ENCODE measurements at regions of chr13 and their contacts with region 1.

Region 1: GRCh38 chr13:49810567-49811526 is 18.4 kb upstream of the KPNA3 start:
- DNase-seq: peak; percentile 93
- ATAC-seq: peak; percentile 83
- H3K4me3 ChIP-seq: peak overlapping the region; percentile 6 to 49 (median 39); a peak in 4 of 6 replicates
- H3K27ac ChIP-seq: peak overlapping the region; percentile 92
- H3K4me1 ChIP-seq: peaks cover 100% of the 10 kb centered on the region
- H3K27me3 ChIP-seq: no peaks in the 10 kb centered on the region
- CTCF ChIP-seq: no peak
- EP300 ChIP-seq: peak in 1 of 2 experiments; percentile 86; a peak in 2 of 4 replicates
- POLR2A ChIP-seq: no peak
- RAD21 ChIP-seq: no peak

Region 2: DNA sequence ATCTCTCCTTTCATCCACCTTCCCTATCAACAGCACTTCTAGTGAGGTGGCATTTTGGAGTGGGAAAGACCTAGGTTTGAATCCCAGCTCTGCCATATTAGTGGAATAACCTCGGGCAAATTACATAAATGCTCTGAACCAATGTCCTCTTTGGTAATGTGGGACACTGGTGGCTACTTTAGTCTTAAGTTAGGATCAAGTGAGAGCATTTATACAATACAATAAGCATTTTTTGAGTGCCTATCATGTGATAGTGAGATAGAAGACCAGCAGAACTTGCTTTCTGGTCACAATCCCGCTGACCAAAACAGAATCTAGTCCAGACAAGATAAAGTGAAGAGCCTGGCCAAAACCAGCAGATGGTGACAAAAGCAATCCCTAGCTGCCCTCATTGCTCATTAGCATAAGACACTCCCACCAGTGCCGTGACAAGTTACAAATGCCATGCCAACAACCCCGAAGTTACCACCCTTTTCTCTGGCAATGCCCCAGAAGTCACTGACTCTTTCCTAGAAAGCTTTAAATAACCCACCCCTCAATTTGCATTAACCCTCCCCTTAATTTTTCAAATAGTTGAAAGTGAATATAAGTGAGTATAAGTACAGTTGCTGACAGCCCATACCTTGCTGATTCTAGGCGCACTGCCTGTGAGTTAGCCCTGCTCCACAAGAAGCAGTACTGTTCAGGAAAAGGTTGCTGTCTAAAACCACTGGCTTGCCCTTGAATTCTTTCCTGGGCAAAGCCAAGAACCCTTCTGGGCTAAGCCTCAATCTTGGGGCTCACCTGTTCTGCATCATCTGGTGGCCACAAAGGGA is 10.6 kb after region 1 on chr13:
- CTCF ChIA-PET with region 1: no interaction called
- POLR2A ChIA-PET with region 1: interaction called, 22 read pairs
- in situ Hi-C with region 1: no loop called
- intact Hi-C with region 1: no loop called
- DNase-seq: no peak
- ATAC-seq: no peak; the same call in 2 of the 3 replicates
- H3K4me3 ChIP-seq: no peak overlapping the region
- H3K27ac ChIP-seq: peak overlapping the region; percentile 53
- H3K4me1 ChIP-seq: peaks cover 27% of the 10 kb centered on the region
- H3K27me3 ChIP-seq: no peaks in the 10 kb centered on the region
- CTCF ChIP-seq: no peak
- EP300 ChIP-seq: no peak
- POLR2A ChIP-seq: no peak
- RAD21 ChIP-seq: no peak

Region 3: GRCh38 chr13:49840266-49840665 is 29.4 kb after region 1 on chr13:
- CTCF ChIA-PET with region 1: no interaction called
- POLR2A ChIA-PET with region 1: interaction called, 3 read pairs
- in situ Hi-C with region 1: loop called (anchors 5 kb)
- intact Hi-C with region 1: loop called (anchors 5 kb)
- DNase-seq: peak; percentile 61
- ATAC-seq: peak; percentile 32; the same call in 2 of the 3 replicates
- H3K4me3 ChIP-seq: no peak overlapping the region
- H3K27ac ChIP-seq: no peak overlapping the region
- H3K4me1 ChIP-seq: peaks cover 51% of the 10 kb centered on the region
- H3K27me3 ChIP-seq: no peaks in the 10 kb centered on the region
- CTCF ChIP-seq: no peak
- EP300 ChIP-seq: no peak
- POLR2A ChIP-seq: no peak
- RAD21 ChIP-seq: no peak

Region 4: DNA sequence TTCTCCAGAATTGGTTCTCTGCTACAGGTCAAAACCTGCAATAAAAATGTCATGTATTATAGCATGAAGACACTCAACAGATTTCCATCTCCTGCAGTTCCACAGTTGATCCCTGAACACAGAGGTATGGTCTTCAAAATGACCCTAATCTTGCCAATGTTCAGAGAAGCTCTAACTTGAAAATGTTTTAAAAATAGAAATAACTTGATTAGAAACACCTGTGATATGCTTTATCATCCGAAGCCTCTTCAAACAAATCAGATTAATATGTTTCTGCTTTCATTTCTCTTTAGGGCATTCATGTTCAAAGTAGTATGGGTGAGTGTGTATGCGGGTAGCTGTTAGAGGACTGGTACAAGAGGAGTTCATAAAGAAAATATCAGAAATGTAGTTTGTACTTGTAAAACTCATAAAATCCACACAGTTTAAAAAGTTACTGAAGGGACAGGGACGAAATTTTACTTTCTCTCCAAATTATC is 264.8 kb after region 1 on chr13:
- CTCF ChIA-PET with region 1: no interaction called
- POLR2A ChIA-PET with region 1: no interaction called
- in situ Hi-C with region 1: no loop called
- intact Hi-C with region 1: no loop called
- DNase-seq: no peak
- ATAC-seq: peak; percentile 45; the same call in 2 of the 3 replicates
- H3K4me3 ChIP-seq: no peak overlapping the region
- H3K27ac ChIP-seq: peak overlapping the region; percentile 8
- H3K4me1 ChIP-seq: peaks cover 52% of the 10 kb centered on the region
- H3K27me3 ChIP-seq: no peaks in the 10 kb centered on the region
- CTCF ChIP-seq: no peak
- EP300 ChIP-seq: no peak
- POLR2A ChIP-seq: no peak
- RAD21 ChIP-seq: no peak